AG04449 (cell line): ENCODE measurements at regions of chr12 and their contacts with region 1.

Region 1: DNA sequence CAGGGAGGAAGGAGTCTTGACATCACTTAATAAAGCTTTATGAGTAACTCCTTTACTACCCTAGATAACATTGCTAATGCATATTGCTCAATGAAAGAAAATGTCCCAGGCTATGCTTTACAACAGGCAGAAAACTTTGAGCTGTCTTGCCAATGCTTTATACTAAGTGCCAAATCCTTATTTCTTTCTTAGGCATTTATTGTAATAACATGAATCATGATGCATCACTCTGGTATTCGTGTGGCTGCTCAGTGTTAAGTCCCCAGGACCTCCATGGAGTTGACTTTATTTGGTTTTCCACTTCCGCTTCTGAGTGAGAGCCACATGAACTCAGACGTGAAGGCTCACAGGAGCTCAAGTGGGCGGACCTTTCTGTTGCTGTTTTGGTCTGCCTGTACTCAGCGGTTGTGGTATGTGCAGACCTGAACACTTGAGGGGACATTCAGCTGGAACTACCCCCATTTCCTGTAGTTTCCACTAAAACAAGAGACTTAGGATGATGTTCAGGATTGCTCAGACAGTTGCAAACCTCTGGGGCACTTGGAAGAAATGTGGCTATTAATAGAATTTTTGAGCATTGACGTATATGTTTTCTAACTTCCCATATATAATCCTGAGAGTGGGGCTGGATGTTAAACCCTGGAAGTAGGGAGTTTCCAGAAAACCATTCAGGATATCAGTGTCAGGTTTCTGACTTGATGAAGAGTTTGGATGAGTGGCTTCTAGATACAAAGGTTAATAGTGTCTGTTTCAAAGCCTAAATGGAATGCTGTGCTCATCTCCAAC is 258.6 kb downstream of the MSRB3 start:
- DNase-seq: peak; percentile 100
- H3K4me3 ChIP-seq: no peak overlapping the region
- CTCF ChIP-seq: no peak

Region 2: GRCh38 chr12:65525491-65526161 is 11.4 kb before region 1 on chr12:
- CTCF ChIA-PET with region 1: no interaction called
- POLR2A ChIA-PET with region 1: interaction called, 23 read pairs
- DNase-seq: peak; percentile 61
- H3K4me3 ChIP-seq: no peak overlapping the region
- CTCF ChIP-seq: no peak

Region 3: DNA sequence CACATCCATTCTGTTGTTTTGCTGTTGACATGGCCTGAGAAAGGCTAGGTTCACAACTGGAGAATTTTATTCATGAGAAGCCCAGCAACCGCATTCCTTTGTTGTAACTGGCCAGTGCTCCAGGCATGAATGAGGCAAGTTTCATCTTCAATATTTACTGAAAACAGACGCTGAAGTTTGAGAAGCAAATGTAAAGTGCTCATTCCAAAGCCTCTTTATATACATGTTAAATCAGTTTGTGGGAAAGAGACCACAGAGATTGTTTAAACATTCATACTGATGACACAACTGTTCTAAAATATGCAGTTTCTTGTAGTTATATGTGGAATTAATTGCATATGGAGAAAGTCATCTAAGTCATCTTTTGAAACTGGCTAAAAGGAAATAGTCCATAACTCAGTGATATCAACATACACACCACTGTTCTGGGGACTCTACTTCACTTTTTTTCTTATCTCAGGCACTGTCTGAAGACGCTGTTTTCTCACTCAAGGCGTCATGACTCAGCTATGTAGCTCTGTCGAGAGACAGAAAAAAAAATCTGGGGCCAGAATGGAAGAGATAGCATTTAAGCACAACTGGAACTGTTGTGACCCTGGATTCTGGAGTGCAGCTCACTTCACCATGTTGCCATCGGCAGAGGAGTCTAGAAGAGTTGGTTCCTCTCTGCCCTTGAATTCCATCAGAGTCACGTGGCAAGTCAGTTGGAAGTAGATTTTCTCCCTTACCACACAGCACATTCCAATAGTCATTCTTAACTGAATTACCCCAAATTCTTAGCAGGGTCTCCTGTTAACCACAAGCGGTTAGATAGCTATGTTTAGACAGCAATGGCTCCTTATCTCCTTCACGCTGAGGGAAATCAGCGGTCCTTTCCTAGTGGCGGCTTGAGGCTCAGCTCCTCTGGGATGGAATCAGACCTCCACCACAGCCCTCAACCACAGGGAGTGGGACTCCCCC is 28.8 kb after region 1 on chr12:
- CTCF ChIA-PET with region 1: interaction called, 5 read pairs
- POLR2A ChIA-PET with region 1: interaction called, 21 read pairs
- DNase-seq: peak; percentile 98
- H3K4me3 ChIP-seq: peak overlapping the region; percentile 6
- CTCF ChIP-seq: peak; percentile 19